ENCODE measurements at regions of chr1 and their contacts with region 1.

Region 1: GRCh38 chr1:113811888-113812660 is at the start of gene RSBN1:
- DNase-seq: peak; percentile 92 to 99 (median 98)
- ATAC-seq: peak; percentile 95
- H3K4me3 ChIP-seq: peak within 1 kb of the TSS; percentile 88
- H3K4me3 Mint-ChIP-seq: peak within 1 kb of the TSS; percentile 91 to 99 (median 97)
- H3K27ac ChIP-seq: peak within 1 kb of the TSS; percentile 97
- H3K27ac Mint-ChIP-seq: peak within 1 kb of the TSS; percentile 96 to 99 (median 98)
- H3K4me1 ChIP-seq: peaks cover 17 to 25% of the 10 kb centered on the region in 2 donors
- H3K4me1 Mint-ChIP-seq: peaks cover 20 to 51% (median 38%) of the 10 kb centered on the region in 7 donors
- H3K27me3 ChIP-seq: no peaks in the 10 kb centered on the region
- H3K27me3 Mint-ChIP-seq: no peaks in the 10 kb centered on the region
- total RNA-seq, gene RSBN1: 29.9 to 58.1 (median 42.0) TPM

Region 2: GRCh38 chr1:112955781-112956543 is 856.1 kb before region 1 on chr1 and contains the start of gene SLC16A1:
- CTCF ChIA-PET with region 1: no interaction called
- POLR2A ChIA-PET with region 1: no interaction called
- intact Hi-C with region 1: loop called in 1 of 2 experiments (anchors 10 kb)
- DNase-seq: peak; percentile 80 to 94 (median 87)
- ATAC-seq: peak; percentile 90
- H3K4me3 ChIP-seq: peak within 1 kb of the TSS; percentile 97
- H3K4me3 Mint-ChIP-seq: peak within 1 kb of the TSS; percentile 71 to 100 (median 97)
- H3K27ac ChIP-seq: peak within 1 kb of the TSS; percentile 81
- H3K27ac Mint-ChIP-seq: peak within 1 kb of the TSS; percentile 25 to 100 (median 88)
- H3K4me1 ChIP-seq: peaks cover 16 to 17% of the 10 kb centered on the region in 2 donors
- H3K4me1 Mint-ChIP-seq: peaks cover 33 to 66% (median 57%) of the 10 kb centered on the region in 7 donors
- H3K27me3 ChIP-seq: no peaks in the 10 kb centered on the region
- H3K27me3 Mint-ChIP-seq: no peaks in the 10 kb centered on the region
- total RNA-seq, gene SLC16A1: 10.1 to 43.6 (median 19.1) TPM

Region 3: DNA sequence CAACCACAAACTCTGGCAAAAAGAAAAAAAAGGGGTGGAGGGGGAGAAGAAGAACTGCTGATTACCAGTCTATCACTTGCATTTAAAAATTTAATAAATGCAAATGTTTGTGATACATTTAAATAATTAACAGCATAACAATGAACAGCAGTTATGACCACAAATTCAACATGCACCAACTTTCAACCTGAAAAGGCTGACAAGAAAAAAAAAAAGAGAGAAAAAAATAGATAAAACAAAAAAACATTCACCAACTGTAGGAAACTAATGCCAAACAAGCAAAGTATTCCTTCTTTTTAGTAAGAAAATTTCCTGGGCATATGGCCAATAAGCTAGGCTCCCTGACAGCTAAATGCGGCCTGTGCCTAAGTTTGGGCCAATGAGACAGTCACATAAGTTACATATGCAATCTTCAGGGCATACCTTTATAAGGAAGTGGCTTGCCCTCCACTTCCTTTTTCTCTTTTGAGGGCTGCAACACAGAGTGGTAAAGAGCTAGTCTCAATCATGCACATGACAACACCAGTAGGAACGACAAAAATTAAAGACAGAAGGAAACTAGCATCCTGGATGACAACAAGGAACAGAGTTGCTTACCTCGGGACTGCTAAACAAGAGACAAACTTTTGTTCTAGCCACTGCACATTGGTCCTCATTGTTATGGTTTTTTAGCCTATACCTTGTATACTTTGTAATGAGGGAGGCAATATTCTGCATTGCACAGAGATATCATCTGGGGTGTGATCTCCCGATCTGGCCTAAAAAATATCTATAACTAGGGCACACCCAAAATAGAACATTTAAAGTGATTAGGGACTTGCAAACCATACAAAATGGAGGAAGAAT is 28.6 kb before region 1 on chr1:
- CTCF ChIA-PET with region 1: interaction called, 4 read pairs
- POLR2A ChIA-PET with region 1: interaction called, 45 read pairs
- intact Hi-C with region 1: loop called (anchors 1 kb)
- DNase-seq: peak in 7 of 9 donors; percentile 57 to 74 (median 66)
- ATAC-seq: peak; percentile 98
- H3K4me3 ChIP-seq: peak overlapping the region; percentile 7
- H3K4me3 Mint-ChIP-seq: peak overlapping the region in 7 of 10 donors; percentile 5 to 80 (median 67)
- H3K27ac ChIP-seq: peak overlapping the region; percentile 61
- H3K27ac Mint-ChIP-seq: peak overlapping the region in 4 of 9 donors; percentile 60 to 97 (median 90)
- H3K4me1 ChIP-seq: peaks cover 52 to 62% of the 10 kb centered on the region in 2 donors
- H3K4me1 Mint-ChIP-seq: peaks cover 34 to 54% (median 42%) of the 10 kb centered on the region in 7 donors
- H3K27me3 ChIP-seq: no peaks in the 10 kb centered on the region
- H3K27me3 Mint-ChIP-seq: no peaks in the 10 kb centered on the region

Region 4: DNA sequence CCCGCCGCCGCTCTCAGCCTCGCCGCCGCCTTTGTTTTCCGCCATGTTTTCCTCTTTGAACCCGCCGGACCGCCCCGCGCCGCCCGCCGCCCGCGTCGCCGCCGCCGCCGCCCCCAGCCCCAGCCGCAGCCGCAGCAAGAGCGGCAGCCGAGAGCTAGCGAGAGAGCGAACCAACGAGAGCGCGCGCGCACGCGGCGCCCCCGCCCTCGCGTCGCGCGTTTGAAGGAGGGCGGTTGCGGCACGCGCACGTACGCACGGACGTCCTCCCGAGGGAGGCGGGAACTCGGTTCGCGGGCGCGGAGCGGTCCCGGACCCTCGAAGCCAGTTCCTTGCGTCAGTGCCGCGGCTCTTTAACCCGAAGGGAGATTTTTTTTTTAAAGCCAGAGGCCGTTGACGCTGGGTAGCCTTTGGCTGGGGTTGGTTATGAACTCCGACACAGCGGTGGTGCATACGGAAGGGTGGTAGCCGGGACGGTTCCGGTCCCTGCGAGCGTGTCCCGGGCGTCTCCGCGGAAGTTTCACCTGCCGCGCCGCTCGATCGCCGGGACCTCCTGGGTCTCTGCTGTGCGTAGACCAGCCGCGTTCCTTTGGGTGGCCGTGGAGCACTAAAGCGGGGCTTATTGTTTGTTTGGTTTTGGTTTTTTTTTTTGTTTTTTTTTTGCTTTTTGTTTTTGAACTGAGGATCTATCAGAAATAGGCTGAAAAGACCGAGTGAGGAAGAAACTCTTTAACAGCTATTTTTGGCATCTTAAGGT is 699.1 kb after region 1 on chr1 and contains the start of gene TRIM33:
- CTCF ChIA-PET with region 1: no interaction called
- POLR2A ChIA-PET with region 1: no interaction called
- intact Hi-C with region 1: loop called in 1 of 2 experiments (anchors 2 kb)
- DNase-seq: peak; percentile 91 to 95 (median 93)
- ATAC-seq: peak; percentile 89
- H3K4me3 ChIP-seq: peak within 1 kb of the TSS; percentile 71
- H3K4me3 Mint-ChIP-seq: peak within 1 kb of the TSS; percentile 86 to 99 (median 97)
- H3K27ac ChIP-seq: peak within 1 kb of the TSS; percentile 100
- H3K27ac Mint-ChIP-seq: peak within 1 kb of the TSS; percentile 98 to 100 (median 99)
- H3K4me1 ChIP-seq: peaks cover 22 to 29% of the 10 kb centered on the region in 2 donors
- H3K4me1 Mint-ChIP-seq: peaks cover 41 to 63% (median 52%) of the 10 kb centered on the region in 7 donors
- H3K27me3 ChIP-seq: no peaks in the 10 kb centered on the region
- H3K27me3 Mint-ChIP-seq: peaks cover 0 to 7% (median 0%) of the 10 kb centered on the region in 5 donors
- total RNA-seq, gene TRIM33: 43.8 to 57.6 (median 51.1) TPM

Region 5: GRCh38 chr1:114716304-114717170 is 904.5 kb after region 1 on chr1 and contains the start of gene NRAS:
- CTCF ChIA-PET with region 1: no interaction called
- POLR2A ChIA-PET with region 1: no interaction called
- intact Hi-C with region 1: loop called in 1 of 2 experiments (anchors 1 kb)
- DNase-seq: peak; percentile 90 to 96 (median 94)
- ATAC-seq: peak; percentile 98
- H3K4me3 ChIP-seq: peak within 1 kb of the TSS; percentile 98
- H3K4me3 Mint-ChIP-seq: peak within 1 kb of the TSS; percentile 91 to 100 (median 96)
- H3K27ac ChIP-seq: peak within 1 kb of the TSS; percentile 98
- H3K27ac Mint-ChIP-seq: peak within 1 kb of the TSS; percentile 93 to 99 (median 97)
- H3K4me1 ChIP-seq: peaks cover 17 to 20% of the 10 kb centered on the region in 2 donors
- H3K4me1 Mint-ChIP-seq: peaks cover 10 to 34% (median 25%) of the 10 kb centered on the region in 7 donors
- H3K27me3 ChIP-seq: no peaks in the 10 kb centered on the region
- H3K27me3 Mint-ChIP-seq: no peaks in the 10 kb centered on the region
- total RNA-seq, gene NRAS: 22.3 to 56.0 (median 25.0) TPM

Measured in naive thymus-derived CD4-positive, alpha-beta T cell (primary cell).